Caco-2 (cell line): ENCODE measurements at regions of chr5 and their contacts with region 1.

Region 1: GRCh38 chr5:180470966-180471582 is 23.1 kb upstream of the CNOT6 start:
- DNase-seq: peak; percentile 60 to 72
- H3K4me3 ChIP-seq: no peak overlapping the region
- H3K4me3 Mint-ChIP-seq: no peak overlapping the region
- H3K27ac Mint-ChIP-seq: no peak overlapping the region
- H3K4me1 ChIP-seq: no peaks in the 10 kb centered on the region
- H3K4me1 Mint-ChIP-seq: peaks cover 6% of the 10 kb centered on the region
- H3K27me3 ChIP-seq: peaks cover 2% of the 10 kb centered on the region; the same call in 1 of the 2 replicates
- H3K27me3 Mint-ChIP-seq: peaks cover 2% of the 10 kb centered on the region
- CTCF ChIP-seq: peak; percentile 91 to 95

Region 2: GRCh38 chr5:180117000-180117725 is 353.9 kb before region 1 on chr5:
- CTCF ChIA-PET with region 1: no interaction called
- POLR2A ChIA-PET with region 1: no interaction called
- intact Hi-C with region 1: loop called (anchors 2 kb)
- DNase-seq: peak; percentile 52 to 61
- H3K4me3 ChIP-seq: no peak overlapping the region
- H3K4me3 Mint-ChIP-seq: no peak overlapping the region
- H3K27ac Mint-ChIP-seq: no peak overlapping the region
- H3K4me1 ChIP-seq: no peaks in the 10 kb centered on the region
- H3K4me1 Mint-ChIP-seq: no peaks in the 10 kb centered on the region
- H3K27me3 ChIP-seq: no peaks in the 10 kb centered on the region
- H3K27me3 Mint-ChIP-seq: no peaks in the 10 kb centered on the region
- CTCF ChIP-seq: peak; percentile 60 to 78

Region 3: GRCh38 chr5:180209137-180209581 is 261.9 kb before region 1 on chr5 and contains the start of gene RASGEF1C:
- CTCF ChIA-PET with region 1: no interaction called
- POLR2A ChIA-PET with region 1: no interaction called
- intact Hi-C with region 1: loop called (anchors 10 kb)
- DNase-seq: peak in 1 of 2 experiments; percentile 85
- H3K4me3 ChIP-seq: peak within 1 kb of the TSS; percentile 53
- H3K4me3 Mint-ChIP-seq: peak within 1 kb of the TSS; percentile 64
- H3K27ac Mint-ChIP-seq: no peak within 1 kb of the TSS
- H3K4me1 ChIP-seq: peaks cover 7% of the 10 kb centered on the region
- H3K4me1 Mint-ChIP-seq: peaks cover 6% of the 10 kb centered on the region
- H3K27me3 ChIP-seq: no peaks in the 10 kb centered on the region
- H3K27me3 Mint-ChIP-seq: peaks cover 11% of the 10 kb centered on the region
- CTCF ChIP-seq: peak in 1 of 2 experiments; percentile 22
- total RNA-seq, gene RASGEF1C: not detected in 2 replicates

Region 4: GRCh38 chr5:180291943-180292831 is 178.9 kb before region 1 on chr5 and contains the start of gene MAPK9:
- CTCF ChIA-PET with region 1: interaction called, 13 read pairs
- POLR2A ChIA-PET with region 1: no interaction called
- intact Hi-C with region 1: loop called (anchors 1 kb)
- DNase-seq: peak; percentile 82 to 91
- H3K4me3 ChIP-seq: peak within 1 kb of the TSS; percentile 86
- H3K4me3 Mint-ChIP-seq: peak within 1 kb of the TSS; percentile 94
- H3K27ac Mint-ChIP-seq: peak within 1 kb of the TSS; percentile 91
- H3K4me1 ChIP-seq: peaks cover 39% of the 10 kb centered on the region
- H3K4me1 Mint-ChIP-seq: peaks cover 44% of the 10 kb centered on the region
- H3K27me3 ChIP-seq: no peaks in the 10 kb centered on the region
- H3K27me3 Mint-ChIP-seq: no peaks in the 10 kb centered on the region
- CTCF ChIP-seq: no peak
- total RNA-seq, gene MAPK9: 76.5 and 93.1 TPM in 2 replicates

Region 5: DNA sequence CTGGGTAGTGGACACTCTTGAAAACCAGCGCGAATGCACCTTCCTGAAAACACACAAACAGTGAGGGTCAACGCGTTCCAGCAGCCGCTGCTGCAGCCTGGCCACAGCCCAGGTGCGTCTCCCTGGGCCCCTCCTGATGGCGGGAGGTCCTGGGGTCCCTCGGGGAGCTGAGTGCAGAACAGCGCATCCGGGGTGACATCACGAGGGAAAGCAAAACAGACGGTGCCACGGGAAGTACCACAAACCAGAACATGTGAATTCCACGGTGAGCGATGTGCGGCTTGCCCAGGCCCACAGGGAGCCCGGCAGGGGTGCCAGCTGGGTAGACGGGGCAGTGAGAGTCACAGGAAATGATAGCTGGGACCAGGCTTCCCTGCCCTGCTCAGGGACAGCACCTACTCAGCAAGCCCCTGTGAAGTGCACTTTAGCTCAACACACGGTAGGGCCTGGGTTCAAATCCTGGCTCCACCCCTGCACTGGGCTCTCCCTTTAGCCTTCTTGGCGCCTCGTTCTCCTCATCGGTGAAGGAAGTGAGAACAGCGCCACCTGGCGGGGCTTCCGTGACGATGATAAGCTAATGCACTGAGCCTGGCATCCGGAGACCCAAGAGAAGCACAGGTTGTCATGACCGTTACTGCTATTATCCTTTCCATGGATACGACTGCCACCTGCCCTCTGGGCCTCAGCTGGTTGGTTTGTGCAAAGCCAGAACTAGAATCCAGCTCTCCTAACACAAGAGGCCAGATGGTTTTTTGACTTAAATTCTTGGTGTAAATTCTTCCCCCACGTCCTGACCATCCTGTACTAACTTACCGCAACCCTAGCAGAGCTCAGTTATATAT is 142.6 kb before region 1 on chr5:
- CTCF ChIA-PET with region 1: interaction called, 7 read pairs
- POLR2A ChIA-PET with region 1: no interaction called
- intact Hi-C with region 1: loop called (anchors 2 kb)
- DNase-seq: peak; percentile 82 to 84
- H3K4me3 ChIP-seq: no peak overlapping the region
- H3K4me3 Mint-ChIP-seq: no peak overlapping the region
- H3K27ac Mint-ChIP-seq: no peak overlapping the region
- H3K4me1 ChIP-seq: no peaks in the 10 kb centered on the region
- H3K4me1 Mint-ChIP-seq: no peaks in the 10 kb centered on the region
- H3K27me3 ChIP-seq: no peaks in the 10 kb centered on the region
- H3K27me3 Mint-ChIP-seq: peaks cover 3% of the 10 kb centered on the region
- CTCF ChIP-seq: peak; percentile 82 to 91

Region 6: GRCh38 chr5:180353048-180353979 is 117.8 kb before region 1 on chr5 and contains the start of gene GFPT2:
- CTCF ChIA-PET with region 1: no interaction called
- POLR2A ChIA-PET with region 1: no interaction called
- intact Hi-C with region 1: loop called (anchors 10 kb)
- DNase-seq: peak; percentile 77 to 85
- H3K4me3 ChIP-seq: peak within 1 kb of the TSS; percentile 47
- H3K4me3 Mint-ChIP-seq: peak within 1 kb of the TSS; percentile 57
- H3K27ac Mint-ChIP-seq: no peak within 1 kb of the TSS
- H3K4me1 ChIP-seq: peaks cover 19% of the 10 kb centered on the region
- H3K4me1 Mint-ChIP-seq: no peaks in the 10 kb centered on the region
- H3K27me3 ChIP-seq: peaks cover 6% of the 10 kb centered on the region
- H3K27me3 Mint-ChIP-seq: peaks cover 21% of the 10 kb centered on the region
- CTCF ChIP-seq: no peak
- total RNA-seq, gene GFPT2: 0.72 and 1.6 TPM in 2 replicates